Colonic mucosa (tissue), 4 donors: ENCODE measurements at regions of chr12 and their contacts with region 1.

Region 1: DNA sequence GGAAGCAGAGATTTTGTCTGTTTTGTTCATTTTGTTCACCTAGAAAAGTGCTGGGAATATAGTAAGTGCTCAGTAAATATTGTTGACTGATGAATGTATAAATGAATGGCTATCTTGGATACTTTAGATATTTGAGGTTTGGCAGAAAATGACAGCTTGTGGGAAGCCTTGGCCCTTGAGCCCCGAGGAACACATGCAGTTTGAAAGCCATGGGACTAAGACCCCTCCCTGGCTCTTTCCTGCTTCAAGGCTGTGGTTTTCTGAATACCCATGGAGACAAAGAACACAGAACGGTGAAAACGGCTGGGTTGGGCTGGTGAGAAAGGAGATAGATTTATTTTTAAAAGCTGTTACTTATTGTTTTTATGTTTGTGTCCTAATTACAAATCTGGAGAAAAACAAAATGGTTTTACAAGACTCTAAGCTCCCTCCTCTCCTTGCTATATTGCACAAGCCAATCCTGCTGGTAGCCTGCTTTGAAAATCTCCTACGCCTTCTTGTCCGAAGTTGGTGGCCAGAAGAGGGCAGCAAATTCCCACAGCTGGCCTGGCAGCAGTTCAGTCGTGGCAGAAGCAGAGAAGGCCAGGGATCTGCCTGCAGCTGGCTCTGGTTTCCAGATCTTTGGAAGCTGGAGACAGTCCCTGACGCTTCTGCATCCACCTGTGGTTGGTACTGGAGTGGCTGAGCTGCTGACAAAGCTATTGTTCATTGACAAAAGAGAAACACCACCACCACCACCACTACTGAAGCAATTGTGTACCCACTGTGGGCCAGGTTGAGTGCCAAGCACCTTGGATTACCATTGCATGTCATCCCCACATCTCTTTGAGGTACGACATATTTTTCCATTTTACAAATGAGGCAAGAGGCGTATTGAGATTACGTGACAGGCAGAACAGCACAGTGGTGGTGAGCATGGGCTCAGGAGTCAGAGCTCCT is 5.2 kb upstream of the KRT85 start:
- DNase-seq: peak; percentile 77
- H3K4me3 ChIP-seq: no peak overlapping the region
- H3K27ac ChIP-seq: no peak overlapping the region
- H3K4me1 ChIP-seq: no peaks in the 10 kb centered on the region
- H3K27me3 ChIP-seq: no peaks in the 10 kb centered on the region
- CTCF ChIP-seq: peak; percentile 66

Region 2: DNA sequence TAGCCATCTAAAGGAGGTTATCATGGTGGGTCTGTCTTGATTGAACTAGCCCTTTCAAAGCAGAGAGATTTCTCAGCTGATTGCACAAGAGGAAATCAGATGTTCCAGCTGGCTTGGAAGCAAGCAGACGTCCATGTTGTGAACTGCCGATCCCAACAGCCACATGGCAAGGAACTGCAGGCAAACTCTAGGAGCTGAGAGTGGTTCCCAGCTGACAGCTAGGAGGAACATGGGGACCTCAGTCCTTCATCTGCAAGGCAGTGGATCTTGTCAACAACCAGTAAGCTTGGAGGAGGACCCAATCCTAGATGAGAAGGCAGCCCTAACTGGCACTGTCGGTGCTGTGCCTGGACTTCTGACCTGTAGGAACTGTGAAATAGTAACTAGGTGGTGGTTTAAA is 413.3 kb before region 1 on chr12:
- intact Hi-C with region 1: no loop called
- DNase-seq: peak; percentile 46
- H3K4me3 ChIP-seq: no peak overlapping the region
- H3K27ac ChIP-seq: peak overlapping the region; percentile 44
- H3K4me1 ChIP-seq: peaks cover 24% of the 10 kb centered on the region
- H3K27me3 ChIP-seq: no peaks in the 10 kb centered on the region
- CTCF ChIP-seq: no peak

Region 3: GRCh38 chr12:52879394-52880351 is 507.2 kb after region 1 on chr12:
- intact Hi-C with region 1: loop called (anchors 5 kb)
- DNase-seq: peak; percentile 92
- H3K4me3 ChIP-seq: peak overlapping the region; percentile 22
- H3K27ac ChIP-seq: no peak overlapping the region
- H3K4me1 ChIP-seq: peaks cover 15% of the 10 kb centered on the region
- H3K27me3 ChIP-seq: no peaks in the 10 kb centered on the region
- CTCF ChIP-seq: peak; percentile 50

Region 4: GRCh38 chr12:52980693-52981423 is 608.4 kb after region 1 on chr12:
- intact Hi-C with region 1: loop called (anchors 10 kb)
- DNase-seq: peak; percentile 95
- H3K4me3 ChIP-seq: no peak overlapping the region
- H3K27ac ChIP-seq: no peak overlapping the region
- H3K4me1 ChIP-seq: no peaks in the 10 kb centered on the region
- H3K27me3 ChIP-seq: no peaks in the 10 kb centered on the region
- CTCF ChIP-seq: peak; percentile 94